Left lung (tissue), 14 donors: ENCODE measurements at regions of chr16 and their contacts with region 1.

Region 1: DNA sequence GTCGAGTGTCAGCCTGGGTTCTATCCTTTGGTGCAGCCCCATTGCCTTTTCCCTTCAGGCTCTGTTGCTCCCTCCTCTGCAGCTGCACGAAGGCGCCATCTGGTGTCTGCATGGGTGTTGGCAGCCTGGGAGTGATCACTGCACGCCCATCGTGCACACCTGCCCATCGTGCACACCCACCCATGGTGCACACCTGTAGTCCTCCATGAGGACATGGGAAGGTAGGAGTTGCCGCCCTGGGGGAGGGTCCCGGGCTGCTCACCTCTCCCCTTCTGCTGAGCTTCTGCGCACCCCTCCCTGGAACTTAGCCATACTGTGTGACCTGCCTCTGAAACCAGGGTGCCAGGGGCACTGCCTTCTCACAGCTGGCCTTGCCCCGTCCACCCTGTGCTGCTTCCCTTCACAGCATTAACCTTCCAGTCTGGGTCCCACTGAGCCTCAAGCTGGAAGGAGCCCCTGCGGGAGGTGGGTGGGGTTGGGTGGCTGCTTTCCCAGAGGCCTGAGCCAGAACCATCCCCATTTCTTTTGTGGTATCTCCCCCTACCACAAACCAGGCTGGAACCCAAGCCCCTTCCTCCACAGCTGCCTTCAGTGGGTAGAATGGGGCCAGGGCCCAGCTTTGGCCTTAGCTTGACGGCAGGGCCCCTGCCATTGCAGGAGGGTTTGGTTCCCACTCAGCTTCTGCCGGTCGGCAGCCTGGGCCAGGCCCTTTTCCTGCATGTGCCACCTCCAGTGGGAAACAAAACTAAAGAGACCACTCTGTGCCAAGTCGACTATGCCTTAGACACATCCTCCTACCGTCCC is 2.9 kb downstream of the CTRL start:
- DNase-seq: peak; percentile 37 to 90 (median 66)
- ATAC-seq: peak; percentile 79
- H3K4me3 ChIP-seq: no peak overlapping the region
- H3K27ac ChIP-seq: no peak overlapping the region
- H3K4me1 ChIP-seq: peaks cover 0 to 17% of the 10 kb centered on the region in 2 donors
- H3K27me3 ChIP-seq: no peaks in the 10 kb centered on the region
- CTCF ChIP-seq: peak; percentile 73 to 85

Region 2: GRCh38 chr16:67672739-67673662 is 255.8 kb before region 1 on chr16:
- intact Hi-C with region 1: loop called in 1 of 2 experiments (anchors 10 kb)
- DNase-seq: peak in 3 of 4 donors; percentile 65 to 81 (median 75)
- ATAC-seq: peak; percentile 74
- H3K4me3 ChIP-seq: no peak overlapping the region
- H3K27ac ChIP-seq: peak overlapping the region; percentile 77 to 86
- H3K4me1 ChIP-seq: peaks cover 28 to 62% of the 10 kb centered on the region in 2 donors
- H3K27me3 ChIP-seq: no peaks in the 10 kb centered on the region
- CTCF ChIP-seq: peak; percentile 75 to 85

Region 3: GRCh38 chr16:67816240-67817031 is 112.3 kb before region 1 on chr16:
- intact Hi-C with region 1: loop called in 1 of 2 experiments (anchors 5 kb)
- DNase-seq: peak; percentile 76 to 97 (median 84)
- ATAC-seq: peak; percentile 100
- H3K4me3 ChIP-seq: no peak overlapping the region
- H3K27ac ChIP-seq: no peak overlapping the region
- H3K4me1 ChIP-seq: peaks cover 0 to 7% of the 10 kb centered on the region in 2 donors
- H3K27me3 ChIP-seq: no peaks in the 10 kb centered on the region
- CTCF ChIP-seq: peak; percentile 100

Region 4: DNA sequence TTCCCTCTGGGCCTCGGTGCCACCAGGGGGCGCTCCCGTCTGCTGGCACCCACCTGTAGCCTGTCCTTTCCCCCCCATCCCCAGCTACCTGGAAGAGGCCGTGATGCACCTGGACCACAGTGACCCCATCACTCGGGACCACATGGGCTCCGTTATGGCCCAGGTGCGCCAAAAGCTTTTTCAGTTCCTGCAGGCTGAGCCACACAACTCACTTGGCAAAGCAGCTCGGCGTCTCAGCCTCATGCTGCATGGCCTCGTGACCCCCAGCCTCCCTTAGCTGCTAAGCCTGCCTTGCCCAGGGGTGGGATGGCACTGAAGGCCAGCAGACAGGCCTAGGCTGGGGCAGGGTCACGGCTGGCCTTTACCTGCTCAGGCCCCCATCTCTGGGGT is 44.9 kb before region 1 on chr16:
- intact Hi-C with region 1: loop called in 1 of 2 experiments (anchors 5 kb)
- DNase-seq: peak; percentile 17 to 92 (median 57)
- ATAC-seq: peak; percentile 67
- H3K4me3 ChIP-seq: no peak overlapping the region
- H3K27ac ChIP-seq: no peak overlapping the region
- H3K4me1 ChIP-seq: peaks cover 0 to 12% of the 10 kb centered on the region in 2 donors
- H3K27me3 ChIP-seq: no peaks in the 10 kb centered on the region
- CTCF ChIP-seq: peak; percentile 37 to 78

Region 5: DNA sequence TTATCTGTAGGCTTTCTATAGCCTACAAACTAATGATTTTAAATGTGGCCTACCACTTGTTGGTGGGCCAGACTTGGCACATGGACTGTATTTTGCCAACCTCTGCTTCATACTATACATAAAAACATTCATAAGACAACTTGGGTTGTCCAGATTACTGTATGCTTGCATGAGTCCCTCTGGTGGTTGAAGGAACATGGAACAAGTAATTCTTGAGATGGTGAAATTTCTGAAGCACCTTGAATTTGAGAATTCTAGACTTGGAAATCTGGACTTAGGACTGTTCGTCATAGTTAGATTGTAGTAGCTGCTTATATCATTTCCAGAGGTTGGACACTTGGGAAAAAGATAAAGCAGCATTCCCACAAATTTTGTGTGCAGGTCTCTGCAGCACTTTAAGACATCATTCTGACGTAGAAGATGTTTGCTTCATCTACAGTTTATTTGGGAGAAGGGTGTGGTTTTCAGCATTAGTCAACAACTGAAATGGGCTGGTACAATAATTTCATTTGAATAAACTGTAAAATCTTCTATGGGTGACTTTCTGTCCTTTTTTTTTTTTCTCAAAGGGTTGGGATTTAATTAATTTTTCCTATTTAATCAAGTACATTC is 187.6 kb after region 1 on chr16:
- intact Hi-C with region 1: no loop called
- DNase-seq: peak in 1 of 4 donors; percentile 15
- ATAC-seq: peak; percentile 57
- H3K4me3 ChIP-seq: no peak overlapping the region
- H3K27ac ChIP-seq: no peak overlapping the region
- H3K4me1 ChIP-seq: peaks cover 6 to 47% of the 10 kb centered on the region in 2 donors
- H3K27me3 ChIP-seq: no peaks in the 10 kb centered on the region
- CTCF ChIP-seq: peak in 1 of 2 donors; percentile 20